ENCODE measurements at regions of chr11 and their contacts with region 1.

Region 1: GRCh38 chr11:108647701-108648527 is 17.0 kb upstream of the DDX10 start:
- DNase-seq: peak; percentile 89
- H3K4me3 Mint-ChIP-seq: no peak overlapping the region
- H3K27ac Mint-ChIP-seq: no peak overlapping the region
- H3K4me1 Mint-ChIP-seq: no peaks in the 10 kb centered on the region
- H3K27me3 Mint-ChIP-seq: peaks cover 12% of the 10 kb centered on the region

Region 2: DNA sequence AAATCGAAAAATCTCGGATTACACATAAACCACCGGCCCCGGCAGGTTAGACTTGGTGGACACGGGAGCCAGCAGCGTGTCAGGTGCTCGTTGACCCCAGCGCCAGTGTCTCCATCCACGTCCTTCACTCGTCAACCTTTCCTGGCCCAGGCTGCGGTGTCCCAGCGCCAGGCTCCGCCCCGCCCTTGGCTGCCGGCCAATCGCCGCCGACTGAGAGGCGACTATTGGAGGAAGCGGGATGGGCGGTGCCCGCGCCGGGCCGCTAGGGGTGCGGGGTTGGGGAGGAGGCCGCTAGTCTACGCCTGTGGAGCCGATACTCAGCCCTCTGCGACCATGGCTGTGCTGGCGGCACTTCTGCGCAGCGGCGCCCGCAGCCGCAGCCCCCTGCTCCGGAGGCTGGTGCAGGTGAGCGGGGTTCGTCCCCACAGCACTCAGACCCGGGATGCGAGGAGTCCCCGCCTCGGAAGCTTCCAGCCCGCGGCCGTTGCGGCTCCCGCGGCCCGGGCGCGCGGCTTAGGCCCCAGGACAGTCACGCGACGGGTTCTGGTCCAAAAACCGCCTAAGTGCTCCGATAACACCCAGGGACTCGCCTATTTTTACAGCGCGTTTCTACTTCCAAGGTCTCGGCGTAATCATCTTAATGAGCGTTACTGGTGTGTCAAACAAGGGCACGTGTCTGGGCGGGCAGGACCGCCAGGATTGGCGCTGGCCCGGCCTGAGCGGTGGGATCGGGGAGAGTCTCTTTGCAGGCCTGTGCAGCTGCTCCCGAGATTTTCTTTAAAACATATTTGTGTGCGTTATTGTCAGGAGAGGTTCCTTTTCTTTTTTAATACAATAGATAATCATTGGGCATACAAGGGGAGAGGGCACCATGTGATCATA is 526.4 kb before region 1 on chr11 and contains the start of gene ACAT1:
- intact Hi-C with region 1: loop called (anchors 1 kb)
- DNase-seq: peak; percentile 99
- H3K4me3 Mint-ChIP-seq: peak within 1 kb of the TSS; percentile 87
- H3K27ac Mint-ChIP-seq: peak within 1 kb of the TSS; percentile 84
- H3K4me1 Mint-ChIP-seq: peaks cover 33% of the 10 kb centered on the region
- H3K27me3 Mint-ChIP-seq: no peaks in the 10 kb centered on the region
- total RNA-seq, gene ACAT1: 65.0 and 65.9 TPM in 2 replicates

Region 3: GRCh38 chr11:108135845-108136544 is 511.9 kb before region 1 on chr11:
- intact Hi-C with region 1: loop called (anchors 5 kb)
- DNase-seq: peak; percentile 71
- H3K4me3 Mint-ChIP-seq: no peak overlapping the region
- H3K27ac Mint-ChIP-seq: peak overlapping the region; percentile 77
- H3K4me1 Mint-ChIP-seq: peaks cover 9% of the 10 kb centered on the region
- H3K27me3 Mint-ChIP-seq: no peaks in the 10 kb centered on the region

Region 4: DNA sequence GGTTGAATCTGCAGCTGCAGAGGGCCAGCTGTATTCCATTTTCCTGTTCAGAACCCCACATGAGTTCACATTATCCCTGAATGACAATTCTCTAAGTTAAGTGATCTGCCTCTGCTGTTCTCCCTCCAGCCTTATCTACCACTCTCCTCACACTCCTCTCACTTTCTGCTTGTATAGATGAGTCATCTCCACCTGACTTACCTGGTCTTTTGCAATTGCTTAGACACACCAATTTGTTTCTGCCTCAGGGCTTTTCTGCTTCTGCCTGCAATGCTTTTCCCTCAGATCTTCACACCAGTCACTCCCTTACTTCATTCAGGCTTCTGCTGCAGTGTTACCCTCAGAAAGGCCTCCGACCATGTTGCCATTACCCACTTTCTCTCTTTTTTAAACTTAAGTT is 306.9 kb before region 1 on chr11:
- intact Hi-C with region 1: loop called (anchors 5 kb)
- DNase-seq: no peak
- H3K4me3 Mint-ChIP-seq: no peak overlapping the region
- H3K27ac Mint-ChIP-seq: no peak overlapping the region
- H3K4me1 Mint-ChIP-seq: peaks cover 11% of the 10 kb centered on the region
- H3K27me3 Mint-ChIP-seq: no peaks in the 10 kb centered on the region

Region 5: GRCh38 chr11:108414958-108415357 is 233.0 kb before region 1 on chr11:
- intact Hi-C with region 1: loop called (anchors 1 kb)
- DNase-seq: no peak
- H3K4me3 Mint-ChIP-seq: no peak overlapping the region
- H3K27ac Mint-ChIP-seq: no peak overlapping the region
- H3K4me1 Mint-ChIP-seq: no peaks in the 10 kb centered on the region
- H3K27me3 Mint-ChIP-seq: peaks cover 3% of the 10 kb centered on the region

Region 6: DNA sequence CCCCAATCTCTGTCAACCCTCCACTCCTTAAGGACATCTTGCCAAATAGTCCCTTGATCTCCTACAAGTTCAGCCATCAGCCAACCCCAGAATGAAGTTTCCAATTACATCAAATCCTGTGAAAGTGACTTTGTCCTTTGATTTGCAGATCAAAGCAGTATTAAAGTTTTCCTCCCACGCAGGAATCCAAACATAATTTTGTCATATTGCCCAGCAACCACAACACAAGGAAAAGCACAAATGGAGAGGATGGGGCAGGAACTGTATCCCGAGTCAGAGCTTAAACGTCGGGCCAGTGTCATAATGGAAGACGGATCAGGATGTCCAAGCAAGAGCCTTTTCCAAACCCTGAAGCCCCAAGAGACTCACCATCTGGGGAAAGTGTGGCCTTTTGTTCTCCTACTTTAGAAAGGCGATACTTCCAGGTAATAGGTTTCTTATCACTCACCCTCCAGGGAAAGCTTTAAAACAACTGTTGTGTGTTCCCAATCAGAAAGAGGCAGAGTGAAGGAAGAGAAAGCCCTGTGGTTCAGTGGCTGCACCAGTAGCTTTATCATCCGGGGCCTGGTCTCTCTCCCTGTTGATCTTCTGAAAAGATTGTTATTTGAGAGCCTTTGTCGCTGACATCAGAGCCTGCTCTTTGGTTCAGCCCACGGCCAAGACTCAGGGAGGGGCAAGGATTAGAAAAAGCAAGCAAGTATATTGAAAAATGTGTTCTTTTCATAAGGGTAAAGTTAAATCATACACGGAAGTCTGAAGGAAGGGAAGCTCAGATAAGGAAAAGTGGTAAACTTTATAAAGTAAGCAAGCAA is 96.1 kb before region 1 on chr11:
- intact Hi-C with region 1: no loop called
- DNase-seq: no peak
- H3K4me3 Mint-ChIP-seq: no peak overlapping the region
- H3K27ac Mint-ChIP-seq: no peak overlapping the region
- H3K4me1 Mint-ChIP-seq: no peaks in the 10 kb centered on the region
- H3K27me3 Mint-ChIP-seq: no peaks in the 10 kb centered on the region

Region 7: DNA sequence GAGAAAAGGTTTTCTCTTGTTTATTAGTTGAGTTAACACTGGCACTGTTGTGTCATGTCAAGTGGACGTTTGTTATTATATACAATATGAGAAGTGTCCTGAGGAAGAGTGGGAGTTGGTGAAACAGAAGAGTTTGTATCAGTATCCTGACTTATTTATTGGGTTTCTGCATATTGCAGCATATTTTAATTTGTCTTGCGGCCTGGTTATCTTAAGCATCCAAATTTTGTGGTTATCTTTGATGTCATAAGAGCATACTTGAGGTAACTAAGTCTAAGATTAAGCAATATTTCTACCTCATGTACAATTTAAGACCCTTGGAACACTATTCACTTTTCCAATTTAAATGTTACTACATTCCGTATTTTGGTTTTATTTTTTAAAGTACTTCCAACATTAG is 120.5 kb after region 1 on chr11:
- intact Hi-C with region 1: no loop called
- DNase-seq: no peak
- H3K4me3 Mint-ChIP-seq: no peak overlapping the region
- H3K27ac Mint-ChIP-seq: no peak overlapping the region
- H3K4me1 Mint-ChIP-seq: no peaks in the 10 kb centered on the region
- H3K27me3 Mint-ChIP-seq: no peaks in the 10 kb centered on the region

Measured in activated CD4-positive, alpha-beta T cell treated with anti-CD3 and anti-CD28 coated beads, Interleukin-2, amount 10 ng/mL, durations not matched to agents 24 days and 14 days (primary cell).